HepG2 (cell line): ENCODE measurements at regions of chr16 and their contacts with region 1.

Region 1: GRCh38 chr16:70661918-70662641 is 15.7 kb downstream of the IL34 start:
- DNase-seq: no peak
- ATAC-seq: peak; percentile 1; the same call in 1 of the 3 replicates
- H3K4me3 ChIP-seq: no peak overlapping the region
- H3K27ac ChIP-seq: peak overlapping the region; percentile 19
- H3K4me1 ChIP-seq: peaks cover 20% of the 10 kb centered on the region
- H3K27me3 ChIP-seq: 0 out of 5 replicates have a peak, but pooled peaks cover 0 to under 1% of the 10 kb centered on the region in 2 experiments
- CTCF ChIP-seq: no peak
- EP300 ChIP-seq: no peak
- POLR2A ChIP-seq: peak; percentile 27 to 59; a peak in 2 of 4 replicates
- RAD21 ChIP-seq: no peak

Region 2: DNA sequence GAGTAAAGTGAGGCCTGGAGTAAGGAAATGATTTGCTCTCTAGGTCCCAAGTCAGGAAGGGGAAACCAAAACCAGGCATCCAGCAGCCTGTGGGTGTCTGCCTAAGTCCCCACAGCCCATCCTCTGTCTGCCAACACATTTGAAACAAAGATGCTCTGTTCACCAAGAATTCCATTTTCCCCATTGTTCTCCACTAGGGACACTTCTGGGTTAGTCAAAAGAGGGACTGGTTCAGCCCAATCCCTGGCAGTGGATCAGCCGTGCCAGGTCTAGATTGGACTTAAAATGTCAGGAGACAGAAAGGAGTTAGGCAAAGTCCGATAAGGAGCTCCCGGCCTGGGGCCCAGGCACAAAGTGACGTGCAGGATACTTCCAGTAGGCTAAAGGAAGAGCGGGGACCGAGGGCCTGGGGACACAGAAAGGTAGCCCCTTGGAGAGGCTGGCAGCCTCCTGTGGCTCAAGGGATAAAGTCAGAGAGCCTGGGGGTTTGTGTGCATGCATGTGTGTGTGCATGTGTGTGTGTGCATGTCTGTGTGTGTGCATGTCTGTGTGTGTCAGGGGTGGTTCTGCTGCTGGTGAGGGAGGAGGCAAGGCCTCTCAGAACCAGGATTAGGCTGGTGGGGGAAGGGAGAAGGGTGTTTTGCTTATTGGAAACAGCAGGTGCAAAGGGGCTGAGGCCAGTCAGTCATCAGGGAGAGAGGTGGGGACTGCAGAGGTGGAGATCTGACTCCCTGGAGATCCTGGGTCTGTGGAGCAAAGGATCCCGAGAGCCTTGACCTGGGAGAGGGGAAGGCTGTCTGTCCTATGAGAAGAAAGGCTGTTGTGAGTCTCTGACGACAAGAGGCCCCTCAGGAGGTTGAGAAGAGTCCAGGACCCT is 57.4 kb before region 1 on chr16:
- CTCF ChIA-PET with region 1: no interaction called
- POLR2A ChIA-PET with region 1: no interaction called
- in situ Hi-C with region 1: no loop called
- intact Hi-C with region 1: no loop called
- DNase-seq: no peak
- ATAC-seq: peak; percentile 73
- H3K4me3 ChIP-seq: no peak overlapping the region
- H3K27ac ChIP-seq: no peak overlapping the region
- H3K4me1 ChIP-seq: no peaks in the 10 kb centered on the region
- H3K27me3 ChIP-seq: peaks cover 1 to 12% of the 10 kb centered on the region in 2 experiments; a peak in 2 of 5 replicates
- CTCF ChIP-seq: no peak
- EP300 ChIP-seq: no peak
- POLR2A ChIP-seq: no peak
- RAD21 ChIP-seq: no peak

Region 3: DNA sequence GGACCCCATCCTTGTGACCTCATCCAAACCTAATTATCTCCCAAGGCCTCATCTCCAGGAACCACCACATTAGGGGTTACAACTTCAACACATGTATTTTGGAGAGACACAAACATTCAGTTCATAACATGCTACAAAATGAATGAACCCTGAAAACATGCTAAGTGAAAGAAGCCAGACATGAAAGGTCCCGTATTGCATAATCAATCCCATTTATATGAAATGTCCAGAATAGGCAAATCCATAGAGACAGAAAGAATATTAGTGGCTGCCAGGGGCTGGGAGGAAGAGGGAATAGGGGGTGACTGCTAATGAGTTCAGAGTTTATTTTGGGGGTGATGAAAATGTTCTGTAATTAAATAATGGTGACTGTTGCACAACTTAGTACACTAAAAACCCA is 19.4 kb before region 1 on chr16:
- CTCF ChIA-PET with region 1: no interaction called
- POLR2A ChIA-PET with region 1: no interaction called
- in situ Hi-C with region 1: no loop called
- intact Hi-C with region 1: no loop called
- DNase-seq: no peak
- ATAC-seq: no peak
- H3K4me3 ChIP-seq: no peak overlapping the region
- H3K27ac ChIP-seq: no peak overlapping the region
- H3K4me1 ChIP-seq: peaks cover 20% of the 10 kb centered on the region
- H3K27me3 ChIP-seq: peaks cover 4 to 29% of the 10 kb centered on the region in 2 experiments; a peak in 4 of 5 replicates
- CTCF ChIP-seq: no peak
- EP300 ChIP-seq: no peak
- POLR2A ChIP-seq: no peak
- RAD21 ChIP-seq: no peak

Region 4: DNA sequence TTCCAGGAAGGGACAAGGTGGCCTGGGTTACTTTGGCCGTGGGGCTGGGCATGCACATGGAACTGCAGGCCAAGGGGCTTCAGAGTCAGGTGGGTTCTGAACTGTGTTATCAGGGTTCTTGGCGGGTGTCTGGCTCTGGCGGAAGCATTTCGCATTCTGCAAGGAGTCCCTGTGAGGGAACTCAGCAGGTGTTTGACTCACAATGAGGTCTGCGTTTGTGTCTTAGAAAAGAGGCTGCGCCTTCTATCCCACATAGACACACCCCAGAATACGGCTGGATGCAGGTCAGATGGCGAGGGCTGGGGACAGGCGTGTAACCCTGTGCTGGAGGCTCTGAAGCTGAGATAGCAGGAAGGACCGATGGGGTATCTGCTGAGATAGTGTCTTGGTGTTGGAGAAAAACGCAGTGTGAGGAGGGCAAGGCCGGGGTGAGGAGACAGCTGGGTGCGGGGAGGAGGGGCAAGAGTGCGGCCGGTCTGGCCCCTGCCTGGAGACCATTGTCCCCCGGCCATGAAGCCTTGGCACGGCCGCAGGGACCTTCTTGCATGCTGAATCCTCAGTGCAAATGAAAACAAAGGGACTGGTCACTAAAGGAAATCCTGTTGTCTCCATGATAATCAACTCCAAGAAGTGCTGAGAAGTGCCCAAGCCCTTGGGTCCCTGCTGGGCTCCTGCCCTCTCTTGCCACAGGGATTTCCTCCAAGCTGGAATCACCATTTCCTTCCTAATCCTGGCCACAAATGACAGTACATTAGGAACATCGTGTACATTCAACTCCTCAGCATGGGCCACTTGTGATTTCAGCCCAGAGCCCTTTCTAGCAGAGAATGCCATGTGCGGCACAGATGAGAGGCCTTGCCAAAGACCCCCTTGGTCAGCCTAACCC is 46.5 kb after region 1 on chr16:
- CTCF ChIA-PET with region 1: no interaction called
- POLR2A ChIA-PET with region 1: interaction called, 5 read pairs
- in situ Hi-C with region 1: no loop called
- intact Hi-C with region 1: loop called (anchors 1 kb)
- DNase-seq: no peak
- ATAC-seq: no peak
- H3K4me3 ChIP-seq: no peak overlapping the region
- H3K27ac ChIP-seq: no peak overlapping the region
- H3K4me1 ChIP-seq: peaks cover 68% of the 10 kb centered on the region
- H3K27me3 ChIP-seq: no peaks in the 10 kb centered on the region
- CTCF ChIP-seq: no peak
- EP300 ChIP-seq: no peak
- POLR2A ChIP-seq: no peak
- RAD21 ChIP-seq: no peak